CD4-positive, alpha-beta memory T cell (primary cell): ENCODE measurements at regions of chr12 and their contacts with region 1.

Region 1: DNA sequence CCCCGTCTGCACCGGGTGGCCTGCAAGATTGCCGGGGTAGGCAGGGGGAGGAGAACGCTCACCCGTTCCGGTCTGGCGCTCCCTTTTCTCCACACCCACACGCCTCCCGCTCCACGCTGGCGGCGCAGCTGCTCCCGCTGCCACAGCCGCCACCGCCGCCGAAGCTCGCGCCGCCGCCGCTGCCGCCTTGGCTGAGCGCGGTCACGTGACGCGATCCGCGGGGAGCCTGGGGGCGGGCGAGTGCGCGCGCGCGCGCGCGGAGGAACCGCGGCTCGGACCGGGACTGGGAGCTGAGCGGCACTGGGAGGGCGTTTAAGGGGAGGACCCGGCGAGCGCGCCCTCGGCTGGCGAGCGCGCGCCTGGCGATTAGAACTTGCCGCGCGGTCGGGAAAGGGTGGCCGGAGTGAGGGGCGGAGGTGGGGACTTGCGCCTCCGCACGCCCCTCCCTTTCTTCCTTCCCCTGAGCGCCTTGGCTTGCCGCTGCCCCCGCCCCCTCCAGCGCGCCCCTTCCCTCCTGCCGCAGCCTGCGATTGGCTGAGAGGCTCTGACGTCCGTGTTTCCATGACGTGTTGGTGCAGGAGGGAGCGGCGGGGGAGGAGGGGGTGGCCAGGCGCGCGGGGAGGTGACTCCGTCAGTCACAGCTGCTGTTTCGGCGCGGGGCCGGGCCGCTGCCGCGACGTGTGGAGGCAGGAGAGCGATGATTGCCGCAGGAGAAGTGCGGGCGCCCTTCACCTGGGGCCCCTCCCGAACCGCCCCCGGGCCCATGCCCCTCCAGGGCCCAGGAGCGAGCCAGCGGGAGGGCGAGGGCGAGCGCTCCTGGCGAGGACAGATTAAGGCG is 738 bp upstream of the ATP2B1 start:
- DNase-seq: peak; percentile 97 to 99 (median 99)
- H3K4me3 ChIP-seq: peak overlapping the region; percentile 81 to 89
- H3K4me3 Mint-ChIP-seq: peak overlapping the region; percentile 90 to 96 (median 93)
- H3K27ac ChIP-seq: peak overlapping the region; percentile 95
- H3K27ac Mint-ChIP-seq: peak overlapping the region; percentile 96 to 99 (median 98)
- H3K4me1 ChIP-seq: peaks cover 41% of the 10 kb centered on the region
- H3K4me1 Mint-ChIP-seq: peaks cover 24 to 54% (median 34%) of the 10 kb centered on the region in 4 donors
- H3K27me3 ChIP-seq: no peaks in the 10 kb centered on the region
- H3K27me3 Mint-ChIP-seq: peaks cover 0 to 2% of the 10 kb centered on the region in 2 donors

Region 2: DNA sequence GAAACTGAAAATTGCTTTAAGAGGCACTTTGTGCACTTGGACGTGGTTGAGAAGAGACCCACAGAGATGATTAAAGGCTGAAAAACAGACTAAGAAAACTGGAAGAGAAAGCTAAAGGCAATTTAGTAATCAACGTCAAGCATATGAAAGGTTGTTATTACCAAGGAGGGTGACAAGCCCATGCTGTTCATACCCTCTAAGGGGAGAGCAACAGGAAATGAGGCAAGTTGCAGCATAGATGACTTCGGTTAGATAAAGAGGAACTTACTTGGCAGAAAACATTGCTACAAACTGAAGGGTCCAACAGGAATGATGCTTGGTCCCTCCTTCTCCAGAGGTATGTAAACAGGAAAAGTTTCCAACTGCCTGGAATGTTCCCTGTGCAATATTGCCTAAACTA is 464.8 kb before region 1 on chr12:
- CTCF ChIA-PET with region 1: no interaction called
- POLR2A ChIA-PET with region 1: no interaction called
- intact Hi-C with region 1: no loop called
- DNase-seq: peak; percentile 28 to 59 (median 49)
- H3K4me3 ChIP-seq: peak overlapping the region in 1 of 2 donors; percentile 21
- H3K4me3 Mint-ChIP-seq: peak overlapping the region; percentile 6 to 70 (median 50)
- H3K27ac ChIP-seq: no peak overlapping the region
- H3K27ac Mint-ChIP-seq: peak overlapping the region; percentile 13 to 73 (median 57)
- H3K4me1 ChIP-seq: peaks cover 30% of the 10 kb centered on the region
- H3K4me1 Mint-ChIP-seq: peaks cover 31 to 34% (median 33%) of the 10 kb centered on the region in 4 donors
- H3K27me3 ChIP-seq: no peaks in the 10 kb centered on the region
- H3K27me3 Mint-ChIP-seq: no peaks in the 10 kb centered on the region

Region 3: GRCh38 chr12:89395712-89396111 is 313.7 kb before region 1 on chr12:
- CTCF ChIA-PET with region 1: no interaction called
- POLR2A ChIA-PET with region 1: no interaction called
- intact Hi-C with region 1: no loop called
- DNase-seq: no peak
- H3K4me3 ChIP-seq: no peak overlapping the region
- H3K4me3 Mint-ChIP-seq: peak overlapping the region in 1 of 8 donors; percentile 8
- H3K27ac ChIP-seq: no peak overlapping the region
- H3K27ac Mint-ChIP-seq: peak overlapping the region in 3 of 7 donors; percentile 37 to 87 (median 52)
- H3K4me1 ChIP-seq: peaks cover 14% of the 10 kb centered on the region
- H3K4me1 Mint-ChIP-seq: peaks cover 10 to 32% (median 15%) of the 10 kb centered on the region in 4 donors
- H3K27me3 ChIP-seq: no peaks in the 10 kb centered on the region
- H3K27me3 Mint-ChIP-seq: no peaks in the 10 kb centered on the region

Region 4: GRCh38 chr12:89621521-89621920 is 87.9 kb before region 1 on chr12:
- CTCF ChIA-PET with region 1: no interaction called
- POLR2A ChIA-PET with region 1: interaction called, 4 read pairs
- intact Hi-C with region 1: loop called (anchors 5 kb)
- DNase-seq: no peak
- H3K4me3 ChIP-seq: no peak overlapping the region
- H3K4me3 Mint-ChIP-seq: no peak overlapping the region
- H3K27ac ChIP-seq: no peak overlapping the region
- H3K27ac Mint-ChIP-seq: no peak overlapping the region
- H3K4me1 ChIP-seq: peaks cover 4% of the 10 kb centered on the region
- H3K4me1 Mint-ChIP-seq: peaks cover 9 to 23% (median 13%) of the 10 kb centered on the region in 4 donors
- H3K27me3 ChIP-seq: no peaks in the 10 kb centered on the region
- H3K27me3 Mint-ChIP-seq: no peaks in the 10 kb centered on the region

Region 5: DNA sequence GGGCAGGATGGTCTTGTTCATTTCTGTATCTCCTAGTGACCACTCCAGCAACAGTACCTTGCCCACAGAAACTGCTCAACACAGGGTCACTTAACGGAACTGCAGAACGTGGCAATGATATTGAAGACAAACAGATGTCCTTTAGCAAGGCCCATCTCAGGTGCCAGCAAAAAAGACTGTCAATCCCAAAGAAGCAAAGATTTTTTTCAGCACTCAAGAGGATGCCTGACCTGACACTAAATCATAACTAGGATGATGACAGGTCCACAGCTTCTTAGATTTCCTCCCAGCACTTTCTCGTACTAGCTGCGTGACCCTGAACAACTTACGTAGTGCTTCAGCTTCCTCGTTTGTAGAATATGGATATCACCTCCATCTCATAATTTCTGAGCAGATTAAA is 40.2 kb before region 1 on chr12:
- CTCF ChIA-PET with region 1: interaction called, 3 read pairs
- POLR2A ChIA-PET with region 1: interaction called, 31 read pairs
- intact Hi-C with region 1: loop called (anchors 5 kb)
- DNase-seq: no peak
- H3K4me3 ChIP-seq: no peak overlapping the region
- H3K4me3 Mint-ChIP-seq: peak overlapping the region in 1 of 8 donors; percentile 31
- H3K27ac ChIP-seq: no peak overlapping the region
- H3K27ac Mint-ChIP-seq: peak overlapping the region in 2 of 7 donors; percentile 19 to 57
- H3K4me1 ChIP-seq: peaks cover 86% of the 10 kb centered on the region
- H3K4me1 Mint-ChIP-seq: peaks cover 70 to 88% (median 80%) of the 10 kb centered on the region in 4 donors
- H3K27me3 ChIP-seq: no peaks in the 10 kb centered on the region
- H3K27me3 Mint-ChIP-seq: no peaks in the 10 kb centered on the region

Region 6: DNA sequence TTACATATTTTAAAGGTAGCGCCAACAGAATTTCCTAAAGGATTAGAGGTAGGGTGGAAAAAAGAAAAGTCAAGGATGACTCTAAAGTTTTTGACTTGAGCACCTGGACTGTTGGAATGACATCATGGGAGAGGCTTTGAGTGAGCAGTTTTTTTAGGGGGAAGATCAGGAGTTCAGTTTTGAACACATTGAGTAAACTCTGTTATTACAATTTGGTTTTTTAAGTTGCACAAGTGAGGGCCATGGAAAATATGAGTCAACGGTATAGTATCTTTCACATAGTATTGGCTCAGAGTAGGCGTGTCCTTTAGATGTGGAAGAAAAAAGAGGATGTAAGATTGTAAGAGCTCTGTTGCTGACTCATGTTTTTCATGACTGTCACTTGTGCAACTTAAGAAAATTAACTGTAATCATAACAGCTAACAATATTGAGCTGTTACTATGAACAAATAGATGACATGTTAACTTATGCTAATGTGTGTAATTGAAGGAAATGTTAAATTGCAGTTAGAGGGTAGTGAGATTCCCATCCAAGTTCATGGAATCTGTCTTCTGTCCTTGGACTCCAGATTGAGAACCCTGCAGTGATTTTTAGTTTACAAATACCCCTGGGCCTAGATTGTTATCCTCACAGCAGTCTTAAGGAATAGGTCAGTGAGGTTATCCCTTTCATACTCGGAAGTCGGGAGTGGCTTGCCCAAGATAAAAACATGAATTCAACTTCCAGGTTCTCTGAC is 47.4 kb after region 1 on chr12:
- CTCF ChIA-PET with region 1: interaction called, 11 read pairs
- POLR2A ChIA-PET with region 1: interaction called, 83 read pairs
- intact Hi-C with region 1: loop called (anchors 1 kb)
- DNase-seq: peak; percentile 33 to 63 (median 59)
- H3K4me3 ChIP-seq: no peak overlapping the region
- H3K4me3 Mint-ChIP-seq: peak overlapping the region in 3 of 8 donors; percentile 21 to 60 (median 47)
- H3K27ac ChIP-seq: no peak overlapping the region
- H3K27ac Mint-ChIP-seq: peak overlapping the region; percentile 54 to 92 (median 76)
- H3K4me1 ChIP-seq: peaks cover 43% of the 10 kb centered on the region
- H3K4me1 Mint-ChIP-seq: peaks cover 38 to 54% (median 44%) of the 10 kb centered on the region in 4 donors
- H3K27me3 ChIP-seq: no peaks in the 10 kb centered on the region
- H3K27me3 Mint-ChIP-seq: no peaks in the 10 kb centered on the region

Region 7: DNA sequence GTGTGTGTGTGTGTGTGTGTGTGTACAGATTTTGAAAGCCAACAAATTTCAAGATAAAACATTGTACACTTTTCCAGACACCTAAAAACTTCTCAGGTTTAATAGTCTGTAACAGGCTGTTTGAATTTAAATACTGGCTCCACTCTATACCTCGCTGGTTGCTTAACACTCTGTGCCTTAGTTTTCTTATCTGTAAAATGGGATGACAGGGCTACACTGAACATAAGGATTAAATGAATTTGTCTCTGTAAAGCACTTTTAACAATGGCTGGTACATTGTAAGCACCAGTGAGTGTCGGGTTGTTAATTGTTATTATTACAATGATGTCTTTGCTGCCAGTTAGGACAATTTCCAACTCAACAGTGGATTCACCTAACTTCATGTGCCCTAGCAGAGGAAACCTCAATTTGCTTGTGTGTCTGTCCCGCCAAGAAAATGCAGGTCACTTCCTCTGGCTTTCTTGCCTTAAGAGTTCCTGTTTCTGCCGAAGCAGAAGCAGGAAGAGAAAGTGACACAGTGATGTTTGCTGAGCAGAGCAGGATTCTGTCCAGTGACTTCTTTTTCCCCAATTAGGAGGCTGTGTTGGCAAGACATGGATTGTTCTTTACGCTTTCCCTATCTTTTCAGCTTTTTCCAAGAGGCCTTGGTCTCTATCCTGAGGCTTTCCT is 153.3 kb after region 1 on chr12:
- CTCF ChIA-PET with region 1: interaction called, 12 read pairs
- POLR2A ChIA-PET with region 1: interaction called, 296 read pairs
- intact Hi-C with region 1: loop called (anchors 1 kb)
- DNase-seq: peak; percentile 68 to 79 (median 75)
- H3K4me3 ChIP-seq: peak overlapping the region; percentile 26 to 39
- H3K4me3 Mint-ChIP-seq: peak overlapping the region; percentile 69 to 87 (median 82)
- H3K27ac ChIP-seq: peak overlapping the region; percentile 95
- H3K27ac Mint-ChIP-seq: peak overlapping the region; percentile 91 to 99 (median 99)
- H3K4me1 ChIP-seq: peaks cover 62% of the 10 kb centered on the region
- H3K4me1 Mint-ChIP-seq: peaks cover 56 to 81% (median 68%) of the 10 kb centered on the region in 4 donors
- H3K27me3 ChIP-seq: no peaks in the 10 kb centered on the region
- H3K27me3 Mint-ChIP-seq: no peaks in the 10 kb centered on the region

Region 8: DNA sequence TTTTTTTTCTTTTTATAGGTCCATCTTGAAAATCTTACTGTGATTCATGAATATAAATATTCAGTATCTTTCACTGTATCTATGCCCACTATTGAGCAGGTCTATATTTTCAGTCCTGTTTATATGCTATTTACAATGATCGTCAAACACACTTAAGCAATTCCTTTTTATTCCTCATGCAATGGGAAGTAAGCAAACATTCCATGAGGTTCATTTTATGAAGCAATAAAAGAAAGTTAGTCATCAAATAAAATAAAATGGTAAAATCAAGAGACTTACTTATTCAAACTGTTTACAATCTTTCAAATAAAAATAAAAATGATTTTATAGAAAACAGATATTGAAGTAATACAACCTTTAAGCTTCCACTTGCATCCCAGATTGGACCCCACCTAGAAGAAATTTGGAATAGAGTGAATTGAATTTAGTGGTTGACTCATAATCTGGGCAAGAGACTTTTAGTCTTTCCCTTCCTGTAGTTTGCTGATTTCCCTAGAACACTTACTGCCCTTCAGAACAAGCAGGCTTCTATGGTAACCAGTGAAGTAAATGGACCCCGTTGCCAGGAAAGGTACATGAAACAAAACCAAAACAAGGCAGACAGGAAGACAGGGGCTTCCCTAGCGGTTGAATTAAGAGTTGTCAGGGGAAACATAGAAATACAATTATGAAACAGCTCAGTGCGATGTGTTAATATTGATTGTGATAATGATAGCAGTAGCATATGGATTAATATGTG is 240.2 kb after region 1 on chr12:
- CTCF ChIA-PET with region 1: interaction called, 11 read pairs
- POLR2A ChIA-PET with region 1: interaction called, 104 read pairs
- intact Hi-C with region 1: loop called (anchors 1 kb)
- DNase-seq: peak; percentile 87 to 94 (median 90)
- H3K4me3 ChIP-seq: no peak overlapping the region
- H3K4me3 Mint-ChIP-seq: peak overlapping the region; percentile 11 to 77 (median 59)
- H3K27ac ChIP-seq: peak overlapping the region; percentile 83
- H3K27ac Mint-ChIP-seq: peak overlapping the region; percentile 74 to 98 (median 93)
- H3K4me1 ChIP-seq: peaks cover 53% of the 10 kb centered on the region
- H3K4me1 Mint-ChIP-seq: peaks cover 49 to 64% (median 58%) of the 10 kb centered on the region in 4 donors
- H3K27me3 ChIP-seq: no peaks in the 10 kb centered on the region
- H3K27me3 Mint-ChIP-seq: no peaks in the 10 kb centered on the region

Region 9: DNA sequence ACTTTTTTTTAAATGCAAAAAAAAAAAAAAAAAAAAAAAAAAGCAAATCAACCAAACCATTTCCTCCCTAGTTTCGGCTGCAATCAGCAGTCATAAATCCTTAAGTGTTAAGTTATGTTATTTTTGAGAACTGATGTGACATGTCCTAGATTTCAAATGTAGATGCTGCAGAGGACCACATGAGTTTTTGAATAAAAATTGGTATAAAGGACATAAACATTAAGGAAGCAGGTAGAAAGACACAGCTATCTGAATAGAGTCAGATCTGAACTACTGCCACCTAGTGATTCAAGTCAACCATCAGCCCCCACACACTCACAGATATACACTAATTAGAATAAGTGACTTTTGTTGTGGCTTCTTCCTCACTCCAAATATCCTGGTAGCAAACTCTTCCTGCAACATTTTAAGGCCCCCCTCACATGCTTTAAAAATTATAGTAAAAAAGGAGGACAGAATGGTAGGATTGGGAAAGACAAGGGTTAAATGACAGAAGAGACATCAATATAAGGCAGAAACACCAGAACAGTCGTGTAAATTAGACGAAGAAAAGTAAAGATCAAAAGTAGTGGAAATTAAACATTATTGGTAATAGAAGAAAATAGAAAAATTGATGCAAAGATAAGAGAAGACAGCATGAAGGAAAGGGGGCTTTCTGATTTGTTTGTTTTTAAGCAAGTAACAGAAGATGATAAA is 393.7 kb after region 1 on chr12:
- CTCF ChIA-PET with region 1: interaction called, 8 read pairs
- POLR2A ChIA-PET with region 1: interaction called, 7 read pairs
- intact Hi-C with region 1: loop called (anchors 1 kb)
- DNase-seq: peak in 4 of 5 donors; percentile 42 to 54 (median 52)
- H3K4me3 ChIP-seq: no peak overlapping the region
- H3K4me3 Mint-ChIP-seq: peak overlapping the region; percentile 54 to 83 (median 80)
- H3K27ac ChIP-seq: no peak overlapping the region
- H3K27ac Mint-ChIP-seq: peak overlapping the region in 3 of 7 donors; percentile 5 to 83 (median 78)
- H3K4me1 ChIP-seq: peaks cover 14% of the 10 kb centered on the region
- H3K4me1 Mint-ChIP-seq: peaks cover 14 to 24% (median 15%) of the 10 kb centered on the region in 4 donors
- H3K27me3 ChIP-seq: no peaks in the 10 kb centered on the region
- H3K27me3 Mint-ChIP-seq: peaks cover 0 to 3% of the 10 kb centered on the region in 2 donors

Region 10: DNA sequence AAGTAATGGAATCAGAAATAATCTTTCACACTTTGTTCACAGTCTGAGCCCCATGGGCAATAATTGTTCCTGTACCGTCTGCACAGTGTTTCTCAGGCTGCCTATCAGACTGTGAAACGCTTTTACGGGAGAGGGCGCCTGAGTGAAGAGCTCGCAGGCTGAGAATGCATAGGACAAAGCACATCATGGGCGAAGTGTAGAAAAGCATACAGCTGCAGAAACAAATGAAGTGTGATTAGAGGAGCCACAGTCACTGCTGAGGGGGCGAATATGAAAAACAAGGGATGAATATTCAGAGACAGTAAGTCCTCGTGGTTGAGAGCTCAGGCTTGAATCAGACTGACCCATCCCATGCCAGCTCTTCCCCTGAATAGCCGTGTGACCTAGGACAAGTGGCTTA is 1911.6 kb after region 1 on chr12:
- CTCF ChIA-PET with region 1: no interaction called
- POLR2A ChIA-PET with region 1: no interaction called
- intact Hi-C with region 1: no loop called
- DNase-seq: no peak
- H3K4me3 ChIP-seq: no peak overlapping the region
- H3K4me3 Mint-ChIP-seq: no peak overlapping the region
- H3K27ac ChIP-seq: no peak overlapping the region
- H3K27ac Mint-ChIP-seq: no peak overlapping the region
- H3K4me1 ChIP-seq: no peaks in the 10 kb centered on the region
- H3K4me1 Mint-ChIP-seq: peaks cover 0 to 1% (median 0%) of the 10 kb centered on the region in 4 donors
- H3K27me3 ChIP-seq: no peaks in the 10 kb centered on the region
- H3K27me3 Mint-ChIP-seq: peaks cover 2 to 7% of the 10 kb centered on the region in 2 donors